ENCODE measurements at regions of chr20 and their contacts with region 1.

Region 1: GRCh38 chr20:11544029-11544678 is 373.5 kb upstream of the BTBD3 start:
- DNase-seq: peak; percentile 67
- H3K4me3 ChIP-seq: 0 out of 2 replicates have a peak overlapping the region, but pooled peaks have one; percentile 24
- H3K27ac ChIP-seq: no peak overlapping the region
- H3K4me1 ChIP-seq: peaks cover 10% of the 10 kb centered on the region
- H3K27me3 ChIP-seq: no peaks in the 10 kb centered on the region; the same call in 1 of the 2 replicates

Region 2: DNA sequence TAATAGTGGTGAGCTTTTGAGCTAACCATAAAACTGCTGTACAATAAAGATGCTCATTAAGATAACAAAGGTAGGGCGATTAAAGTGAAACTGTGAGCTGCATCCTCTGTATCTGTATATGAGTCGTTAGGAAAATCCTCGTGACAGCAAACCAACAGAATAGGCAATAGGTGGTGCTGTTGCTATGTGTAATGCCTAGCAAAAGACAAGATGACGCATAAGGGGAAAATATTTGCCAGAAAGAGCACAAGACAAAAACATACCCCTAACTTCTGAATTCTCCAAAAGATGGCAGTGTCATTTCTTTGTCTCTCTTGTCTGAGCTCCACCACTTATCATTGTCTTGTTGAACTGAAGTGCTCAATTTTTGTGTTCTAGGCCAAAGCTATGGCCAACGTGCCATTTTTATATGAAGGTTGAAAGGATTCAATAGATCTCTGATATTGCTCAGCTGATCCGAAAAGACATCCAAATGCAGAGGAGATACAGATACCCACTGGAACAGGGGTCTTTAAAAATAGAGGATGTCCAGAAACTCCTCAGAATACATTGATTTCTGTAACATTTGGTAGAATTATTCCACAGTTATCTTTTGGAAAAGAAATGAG is 1565.7 kb before region 1 on chr20:
- in situ Hi-C with region 1: loop called (anchors 25 kb)
- DNase-seq: peak; percentile 89
- H3K4me3 ChIP-seq: peak overlapping the region; percentile 45; the same call in 1 of the 2 replicates
- H3K27ac ChIP-seq: no peak overlapping the region
- H3K4me1 ChIP-seq: no peaks in the 10 kb centered on the region
- H3K27me3 ChIP-seq: 0 out of 2 replicates have a peak, but pooled peaks cover 10% of the 10 kb centered on the region

Region 3: GRCh38 chr20:10469599-10469998 is 1074.6 kb before region 1 on chr20:
- in situ Hi-C with region 1: loop called (anchors 10 kb)
- DNase-seq: peak; percentile 84
- H3K4me3 ChIP-seq: no peak overlapping the region
- H3K27ac ChIP-seq: no peak overlapping the region
- H3K4me1 ChIP-seq: peaks cover 13% of the 10 kb centered on the region
- H3K27me3 ChIP-seq: no peaks in the 10 kb centered on the region

Region 4: GRCh38 chr20:10540636-10541493 is 1003.3 kb before region 1 on chr20:
- in situ Hi-C with region 1: loop called (anchors 10 kb)
- DNase-seq: peak; percentile 86
- H3K4me3 ChIP-seq: peak overlapping the region; percentile 23; the same call in 1 of the 2 replicates
- H3K27ac ChIP-seq: peak overlapping the region; percentile 76
- H3K4me1 ChIP-seq: peaks cover 37% of the 10 kb centered on the region
- H3K27me3 ChIP-seq: no peaks in the 10 kb centered on the region

Region 5: GRCh38 chr20:10673988-10674711 is 870.0 kb before region 1 on chr20 and contains the start of gene JAG1:
- in situ Hi-C with region 1: loop called (anchors 25 kb)
- DNase-seq: peak; percentile 96
- H3K4me3 ChIP-seq: peak within 1 kb of the TSS; percentile 82
- H3K27ac ChIP-seq: peak within 1 kb of the TSS; percentile 86
- H3K4me1 ChIP-seq: peaks cover 9% of the 10 kb centered on the region; the same call in 1 of the 2 replicates
- H3K27me3 ChIP-seq: no peaks in the 10 kb centered on the region
- total RNA-seq, gene JAG1: 4.8 and 8.4 TPM in 2 replicates

Region 6: GRCh38 chr20:10924644-10925201 is 619.4 kb before region 1 on chr20:
- in situ Hi-C with region 1: loop called (anchors 25 kb)
- DNase-seq: peak; percentile 86
- H3K4me3 ChIP-seq: no peak overlapping the region
- H3K27ac ChIP-seq: 0 out of 2 replicates have a peak overlapping the region, but pooled peaks have one; percentile 11
- H3K4me1 ChIP-seq: peaks cover 53% of the 10 kb centered on the region
- H3K27me3 ChIP-seq: 0 out of 2 replicates have a peak, but pooled peaks cover 7% of the 10 kb centered on the region

Region 7: DNA sequence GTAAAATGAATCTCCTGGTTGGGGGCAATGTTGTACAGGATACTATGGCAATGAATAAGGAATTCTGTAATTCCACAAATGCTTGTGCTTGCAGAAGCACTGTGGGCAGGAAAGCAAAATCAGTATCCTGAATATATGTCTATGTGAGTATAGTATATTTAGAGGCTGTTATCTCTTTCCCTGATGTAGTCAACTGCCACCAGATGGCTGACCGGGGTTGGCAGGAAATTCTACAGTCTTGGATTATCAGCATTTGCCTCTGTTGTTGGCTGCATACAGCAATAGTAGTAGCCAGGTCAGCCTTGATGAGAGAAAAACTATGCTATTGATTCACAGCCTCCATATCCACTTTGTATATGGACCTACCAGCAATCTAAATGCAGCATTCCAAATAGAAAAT is 445.3 kb before region 1 on chr20:
- in situ Hi-C with region 1: loop called (anchors 25 kb)
- DNase-seq: no peak
- H3K4me3 ChIP-seq: no peak overlapping the region
- H3K27ac ChIP-seq: no peak overlapping the region
- H3K4me1 ChIP-seq: no peaks in the 10 kb centered on the region
- H3K27me3 ChIP-seq: no peaks in the 10 kb centered on the region

Region 8: GRCh38 chr20:12113468-12114371 is 569.6 kb after region 1 on chr20:
- in situ Hi-C with region 1: no loop called
- DNase-seq: no peak
- H3K4me3 ChIP-seq: no peak overlapping the region
- H3K27ac ChIP-seq: no peak overlapping the region
- H3K4me1 ChIP-seq: no peaks in the 10 kb centered on the region
- H3K27me3 ChIP-seq: no peaks in the 10 kb centered on the region